Naive thymus-derived CD4-positive, alpha-beta T cell (primary cell): ENCODE measurements at regions of chr1 and their contacts with region 1.

Region 1: GRCh38 chr1:194102606-194103005 is 916.2 kb upstream of the B3GALT2 start:
- DNase-seq: no peak
- ATAC-seq: no peak
- H3K4me3 ChIP-seq: no peak overlapping the region
- H3K4me3 Mint-ChIP-seq: no peak overlapping the region
- H3K27ac ChIP-seq: no peak overlapping the region
- H3K27ac Mint-ChIP-seq: no peak overlapping the region
- H3K4me1 ChIP-seq: no peaks in the 10 kb centered on the region
- H3K4me1 Mint-ChIP-seq: peaks cover 0 to 20% (median 0%) of the 10 kb centered on the region in 7 donors
- H3K27me3 ChIP-seq: no peaks in the 10 kb centered on the region
- H3K27me3 Mint-ChIP-seq: no peaks in the 10 kb centered on the region

Region 2: GRCh38 chr1:193763266-193763665 is 339.3 kb before region 1 on chr1:
- CTCF ChIA-PET with region 1: no interaction called
- POLR2A ChIA-PET with region 1: no interaction called
- intact Hi-C with region 1: loop called in 1 of 2 experiments (anchors 1 kb)
- DNase-seq: no peak
- ATAC-seq: no peak
- H3K4me3 ChIP-seq: no peak overlapping the region
- H3K4me3 Mint-ChIP-seq: no peak overlapping the region
- H3K27ac ChIP-seq: no peak overlapping the region
- H3K27ac Mint-ChIP-seq: no peak overlapping the region
- H3K4me1 ChIP-seq: no peaks in the 10 kb centered on the region
- H3K4me1 Mint-ChIP-seq: no peaks in the 10 kb centered on the region
- H3K27me3 ChIP-seq: no peaks in the 10 kb centered on the region
- H3K27me3 Mint-ChIP-seq: no peaks in the 10 kb centered on the region

Region 3: DNA sequence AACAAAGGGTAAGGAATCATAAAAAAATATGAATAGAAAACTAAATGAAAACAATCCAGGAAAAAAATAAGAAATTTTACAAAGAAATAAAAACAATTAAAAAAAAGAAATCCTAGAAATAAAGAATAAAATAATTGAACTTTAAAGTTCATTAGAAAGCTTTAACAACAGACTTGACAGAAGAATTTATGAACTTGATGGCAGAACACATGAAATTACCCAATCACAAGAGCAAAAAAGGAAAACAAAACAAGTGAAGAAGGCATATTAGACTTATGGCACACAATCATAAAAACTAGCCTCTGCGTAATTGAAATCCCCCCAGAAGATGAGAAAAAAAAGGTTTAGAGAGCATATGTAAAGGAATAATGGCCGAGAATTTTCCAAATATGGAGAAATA is 113.7 kb before region 1 on chr1:
- CTCF ChIA-PET with region 1: no interaction called
- POLR2A ChIA-PET with region 1: no interaction called
- intact Hi-C with region 1: loop called in 1 of 2 experiments (anchors 5 kb)
- DNase-seq: no peak
- ATAC-seq: no peak
- H3K4me3 ChIP-seq: no peak overlapping the region
- H3K4me3 Mint-ChIP-seq: no peak overlapping the region
- H3K27ac ChIP-seq: no peak overlapping the region
- H3K27ac Mint-ChIP-seq: no peak overlapping the region
- H3K4me1 ChIP-seq: no peaks in the 10 kb centered on the region
- H3K4me1 Mint-ChIP-seq: no peaks in the 10 kb centered on the region
- H3K27me3 ChIP-seq: no peaks in the 10 kb centered on the region
- H3K27me3 Mint-ChIP-seq: no peaks in the 10 kb centered on the region

Region 4: GRCh38 chr1:194223596-194223995 is 121.0 kb after region 1 on chr1:
- CTCF ChIA-PET with region 1: no interaction called
- POLR2A ChIA-PET with region 1: no interaction called
- intact Hi-C with region 1: no loop called
- DNase-seq: no peak
- ATAC-seq: no peak
- H3K4me3 ChIP-seq: no peak overlapping the region
- H3K4me3 Mint-ChIP-seq: no peak overlapping the region
- H3K27ac ChIP-seq: no peak overlapping the region
- H3K27ac Mint-ChIP-seq: no peak overlapping the region
- H3K4me1 ChIP-seq: peaks cover 6 to 10% of the 10 kb centered on the region in 2 donors
- H3K4me1 Mint-ChIP-seq: peaks cover 5 to 25% (median 19%) of the 10 kb centered on the region in 7 donors
- H3K27me3 ChIP-seq: no peaks in the 10 kb centered on the region
- H3K27me3 Mint-ChIP-seq: no peaks in the 10 kb centered on the region